ENCODE measurements at regions of chr1 and their contacts with region 1.

Region 1: DNA sequence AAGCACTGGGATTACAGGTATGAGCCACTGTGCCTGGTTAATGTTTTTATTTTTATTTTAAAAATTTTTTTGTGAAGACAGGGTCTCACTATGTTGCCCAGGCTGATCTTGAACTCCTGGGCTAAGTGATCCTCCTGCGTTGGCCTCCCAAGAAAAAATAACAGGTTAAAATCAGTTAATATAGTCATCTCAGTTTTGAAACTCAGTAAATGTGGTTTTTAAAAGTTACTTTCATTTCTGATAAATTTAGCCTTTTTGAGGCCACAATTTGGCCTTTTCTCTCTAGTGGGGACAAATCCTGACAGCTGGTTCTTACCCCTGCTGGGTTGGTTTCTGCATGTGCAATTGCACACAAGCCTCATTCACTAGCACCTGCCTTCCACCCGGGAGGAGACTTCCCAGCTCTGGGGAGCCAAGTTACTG is 13.3 kb downstream of the PMF1 start:
- DNase-seq: no peak
- H3K4me3 Mint-ChIP-seq: peak overlapping the region; percentile 53
- H3K27ac Mint-ChIP-seq: peak overlapping the region; percentile 79
- H3K4me1 Mint-ChIP-seq: peaks cover 52% of the 10 kb centered on the region
- H3K27me3 Mint-ChIP-seq: no peaks in the 10 kb centered on the region

Region 2: DNA sequence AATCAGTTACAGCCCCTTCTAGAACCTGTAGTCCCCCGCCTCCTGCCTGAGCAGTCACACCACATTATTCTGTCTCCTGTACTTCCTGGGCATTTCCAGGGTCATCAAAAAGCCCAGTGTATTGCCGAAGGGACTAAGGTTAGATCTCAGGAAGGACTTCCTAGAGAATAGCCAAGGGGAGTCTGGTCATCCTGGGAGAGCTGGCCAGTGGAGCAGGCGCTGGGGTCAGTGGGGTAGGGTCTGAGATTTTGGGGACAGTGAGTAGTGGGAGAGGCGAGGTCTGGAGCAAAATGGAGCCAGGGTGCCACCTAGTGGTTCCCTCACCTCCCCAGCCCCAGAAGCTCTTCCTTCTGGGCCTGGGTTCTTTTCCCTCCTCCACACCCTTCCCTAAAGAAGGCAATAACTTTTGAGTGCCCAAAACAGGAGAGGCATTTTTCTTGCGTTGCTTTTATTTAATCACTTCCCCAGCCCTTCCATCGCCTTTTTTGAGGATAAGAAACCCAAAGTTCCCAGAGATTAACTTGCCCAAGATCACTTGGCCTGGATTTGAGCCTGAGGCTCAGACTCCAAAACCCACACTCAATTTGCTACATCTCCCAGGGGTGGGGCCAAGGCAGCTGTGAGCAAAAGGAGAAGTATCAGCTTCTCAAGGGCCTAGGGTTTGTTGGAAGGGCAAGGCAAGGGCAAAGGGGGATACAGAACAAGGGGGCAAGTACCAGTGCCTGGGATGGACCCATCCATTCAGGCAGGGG is 1282.3 kb before region 1 on chr1:
- intact Hi-C with region 1: no loop called
- DNase-seq: peak; percentile 29
- H3K4me3 Mint-ChIP-seq: peak overlapping the region; percentile 0
- H3K27ac Mint-ChIP-seq: peak overlapping the region; percentile 93
- H3K4me1 Mint-ChIP-seq: peaks cover 62% of the 10 kb centered on the region
- H3K27me3 Mint-ChIP-seq: no peaks in the 10 kb centered on the region

Region 3: GRCh38 chr1:156090822-156091188 is 135.3 kb before region 1 on chr1:
- intact Hi-C with region 1: loop called (anchors 1 kb)
- DNase-seq: peak; percentile 76
- H3K4me3 Mint-ChIP-seq: no peak overlapping the region
- H3K27ac Mint-ChIP-seq: no peak overlapping the region
- H3K4me1 Mint-ChIP-seq: peaks cover 3% of the 10 kb centered on the region
- H3K27me3 Mint-ChIP-seq: peaks cover 39% of the 10 kb centered on the region

Region 4: DNA sequence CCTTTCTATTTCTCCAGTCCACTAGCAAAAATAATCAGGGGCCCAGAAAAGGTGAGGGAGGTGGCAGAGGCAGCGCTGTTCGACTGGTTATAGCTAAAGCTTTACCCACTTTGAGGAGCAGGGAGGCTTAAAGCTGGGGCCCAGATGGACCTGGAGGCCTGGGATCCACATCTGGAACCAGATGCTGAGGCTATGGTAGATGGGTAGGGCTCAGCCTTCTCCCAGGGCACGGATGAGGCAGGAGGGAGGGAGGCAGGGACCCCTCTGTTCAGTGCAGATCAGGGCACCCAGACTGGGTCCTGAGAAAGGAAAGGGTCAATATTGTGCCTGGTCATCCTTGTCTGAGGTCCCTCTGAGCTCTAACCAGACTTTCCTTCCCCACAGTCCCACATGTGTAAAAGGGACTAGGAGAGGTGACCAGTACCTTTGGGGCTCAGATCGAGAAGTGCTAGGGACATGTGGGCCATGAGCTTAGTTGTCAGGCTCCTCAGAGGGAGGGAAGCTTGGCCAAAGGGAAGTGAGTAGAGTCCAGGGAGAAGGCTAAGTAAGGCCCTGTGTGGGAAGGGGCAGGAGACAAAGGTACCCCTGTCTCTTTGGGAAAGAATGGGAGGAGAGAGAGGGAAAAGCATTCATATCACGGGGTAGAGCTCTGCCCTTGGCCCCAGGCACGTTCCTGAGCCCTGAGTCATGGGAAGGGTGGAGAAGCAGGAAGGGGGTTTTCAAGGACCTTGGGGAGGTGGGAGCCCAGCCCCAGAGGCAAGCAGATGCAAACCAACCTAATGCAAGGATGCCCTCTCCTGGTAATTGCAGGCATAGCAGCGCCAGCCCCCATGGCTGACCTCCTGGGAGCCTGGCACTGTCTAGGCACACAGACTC is 96.2 kb before region 1 on chr1:
- intact Hi-C with region 1: loop called (anchors 1 kb)
- DNase-seq: peak; percentile 69
- H3K4me3 Mint-ChIP-seq: no peak overlapping the region
- H3K27ac Mint-ChIP-seq: peak overlapping the region; percentile 35
- H3K4me1 Mint-ChIP-seq: peaks cover 50% of the 10 kb centered on the region
- H3K27me3 Mint-ChIP-seq: peaks cover 2% of the 10 kb centered on the region

Region 5: DNA sequence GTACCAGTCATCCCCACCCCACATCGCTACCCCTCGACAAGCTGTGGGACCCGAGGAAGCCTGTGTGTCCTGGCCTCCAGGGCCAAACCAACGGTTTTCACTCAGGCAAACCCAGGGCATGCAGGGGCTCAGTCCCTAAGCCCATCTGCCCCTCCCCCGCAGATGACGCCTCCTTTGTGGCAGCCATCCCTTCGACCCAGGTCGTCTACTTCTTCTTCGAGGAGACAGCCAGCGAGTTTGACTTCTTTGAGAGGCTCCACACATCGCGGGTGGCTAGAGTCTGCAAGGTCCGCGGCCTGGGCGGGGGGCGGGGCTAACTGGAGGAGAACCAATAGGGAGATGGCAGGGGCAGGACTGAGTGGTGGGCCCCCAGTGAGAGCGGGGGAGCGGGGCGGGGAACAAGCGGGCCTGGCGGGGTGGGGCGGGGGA is 65.4 kb before region 1 on chr1:
- intact Hi-C with region 1: loop called (anchors 1 kb)
- DNase-seq: peak; percentile 52
- H3K4me3 Mint-ChIP-seq: peak overlapping the region; percentile 66
- H3K27ac Mint-ChIP-seq: peak overlapping the region; percentile 45
- H3K4me1 Mint-ChIP-seq: peaks cover 54% of the 10 kb centered on the region
- H3K27me3 Mint-ChIP-seq: peaks cover 3% of the 10 kb centered on the region

Region 6: GRCh38 chr1:156198831-156199349 is 27.2 kb before region 1 on chr1:
- intact Hi-C with region 1: loop called (anchors 1 kb)
- DNase-seq: no peak
- H3K4me3 Mint-ChIP-seq: peak overlapping the region; percentile 78
- H3K27ac Mint-ChIP-seq: peak overlapping the region; percentile 94
- H3K4me1 Mint-ChIP-seq: peaks cover 60% of the 10 kb centered on the region
- H3K27me3 Mint-ChIP-seq: no peaks in the 10 kb centered on the region

Region 7: GRCh38 chr1:156421062-156421938 is 195.2 kb after region 1 on chr1:
- intact Hi-C with region 1: no loop called
- DNase-seq: peak; percentile 53
- H3K4me3 Mint-ChIP-seq: peak overlapping the region; percentile 84
- H3K27ac Mint-ChIP-seq: no peak overlapping the region
- H3K4me1 Mint-ChIP-seq: peaks cover 11% of the 10 kb centered on the region
- H3K27me3 Mint-ChIP-seq: peaks cover 89% of the 10 kb centered on the region

Region 8: DNA sequence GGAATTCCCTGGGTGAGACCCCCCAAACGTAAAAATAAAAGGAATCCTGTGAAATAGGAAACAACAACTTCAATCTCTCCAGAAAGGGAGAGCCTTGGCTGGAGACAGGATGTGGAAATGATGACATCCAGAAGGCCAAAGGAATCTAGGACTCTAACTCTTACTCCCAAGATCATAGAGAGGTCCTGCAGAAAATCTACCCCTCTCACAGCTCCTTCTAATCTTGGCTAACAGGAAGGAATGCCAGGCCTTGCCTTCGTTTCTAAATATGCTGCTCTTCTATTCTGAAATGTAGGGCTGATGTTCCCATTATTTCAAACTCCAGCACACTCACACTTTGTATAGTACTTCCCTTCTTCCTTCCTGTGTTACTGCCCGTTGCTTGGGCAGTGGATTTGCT is 778.7 kb after region 1 on chr1:
- intact Hi-C with region 1: no loop called
- DNase-seq: no peak
- H3K4me3 Mint-ChIP-seq: no peak overlapping the region
- H3K27ac Mint-ChIP-seq: no peak overlapping the region
- H3K4me1 Mint-ChIP-seq: no peaks in the 10 kb centered on the region
- H3K27me3 Mint-ChIP-seq: peaks cover 36% of the 10 kb centered on the region